ENCODE measurements at regions of chr22 and their contacts with region 1.

Region 1: GRCh38 chr22:29202212-29203192 is 3.2 kb upstream of the EMID1 start:
- DNase-seq: peak; percentile 38
- ATAC-seq: peak; percentile 61
- H3K4me3 ChIP-seq: peak overlapping the region in 2 of 3 experiments; percentile 11 to 61; a peak in 2 of 6 replicates
- H3K27ac ChIP-seq: no peak overlapping the region
- H3K4me1 ChIP-seq: peaks cover 41% of the 10 kb centered on the region
- H3K27me3 ChIP-seq: peaks cover 7 to 37% of the 10 kb centered on the region in 2 experiments; a peak in 4 of 5 replicates
- CTCF ChIP-seq: peak; percentile 88
- EP300 ChIP-seq: no peak
- POLR2A ChIP-seq: no peak
- RAD21 ChIP-seq: peak; percentile 59

Region 2: DNA sequence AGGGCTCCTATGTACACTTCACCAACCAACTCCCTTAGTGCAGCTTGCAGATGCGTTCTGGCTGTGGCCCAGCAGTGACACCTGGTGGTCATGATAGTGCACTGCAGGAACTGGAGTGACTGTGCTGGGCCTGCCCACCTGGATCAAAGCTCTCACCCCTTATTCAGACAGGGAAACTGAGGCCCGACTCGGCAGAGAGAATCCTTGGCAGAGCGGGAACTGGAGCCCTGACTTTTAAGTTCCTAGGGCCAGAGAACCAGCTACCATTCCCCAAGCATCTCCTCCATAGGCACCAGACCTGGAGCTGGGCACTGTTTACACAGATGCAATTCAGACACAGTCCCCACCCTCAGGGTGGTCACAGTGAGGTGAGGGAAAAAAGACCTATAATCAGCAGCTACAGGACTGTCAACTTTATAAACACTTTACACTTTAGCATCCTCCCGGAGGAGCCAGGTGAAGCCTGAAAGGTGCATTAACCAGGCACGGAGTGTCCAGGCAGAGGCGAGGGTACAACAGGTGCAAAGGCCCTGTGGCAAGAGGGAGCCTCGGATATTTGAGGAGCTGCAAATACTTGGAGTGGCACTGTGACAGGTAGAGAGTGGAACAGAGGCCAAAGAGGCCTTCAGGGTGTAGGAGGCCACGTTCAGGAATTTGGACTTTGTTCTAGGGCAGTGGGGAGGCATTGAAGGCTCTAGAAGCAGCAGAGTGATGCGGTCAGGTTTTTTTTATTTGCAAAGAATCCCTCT is 43.3 kb after region 1 on chr22:
- CTCF ChIA-PET with region 1: interaction called, 18 read pairs
- POLR2A ChIA-PET with region 1: interaction called, 5 read pairs
- in situ Hi-C with region 1: loop called (anchors 5 kb)
- intact Hi-C with region 1: loop called (anchors 1 kb)
- DNase-seq: peak; percentile 62
- ATAC-seq: peak; percentile 91
- H3K4me3 ChIP-seq: peak overlapping the region in 1 of 3 experiments; percentile 12; a peak in 1 of 6 replicates
- H3K27ac ChIP-seq: no peak overlapping the region
- H3K4me1 ChIP-seq: peaks cover 16% of the 10 kb centered on the region
- H3K27me3 ChIP-seq: 0 out of 5 replicates have a peak, but pooled peaks cover 0 to 8% of the 10 kb centered on the region in 2 experiments
- CTCF ChIP-seq: peak; percentile 98
- EP300 ChIP-seq: 0 out of 4 replicates have a peak, but pooled peaks of 1 of the 2 experiments have one; percentile 9
- POLR2A ChIP-seq: no peak
- RAD21 ChIP-seq: peak; percentile 96